Heart right ventricle (tissue), 16 donors: ENCODE measurements at regions of chr17 and their contacts with region 1.

Region 1: DNA sequence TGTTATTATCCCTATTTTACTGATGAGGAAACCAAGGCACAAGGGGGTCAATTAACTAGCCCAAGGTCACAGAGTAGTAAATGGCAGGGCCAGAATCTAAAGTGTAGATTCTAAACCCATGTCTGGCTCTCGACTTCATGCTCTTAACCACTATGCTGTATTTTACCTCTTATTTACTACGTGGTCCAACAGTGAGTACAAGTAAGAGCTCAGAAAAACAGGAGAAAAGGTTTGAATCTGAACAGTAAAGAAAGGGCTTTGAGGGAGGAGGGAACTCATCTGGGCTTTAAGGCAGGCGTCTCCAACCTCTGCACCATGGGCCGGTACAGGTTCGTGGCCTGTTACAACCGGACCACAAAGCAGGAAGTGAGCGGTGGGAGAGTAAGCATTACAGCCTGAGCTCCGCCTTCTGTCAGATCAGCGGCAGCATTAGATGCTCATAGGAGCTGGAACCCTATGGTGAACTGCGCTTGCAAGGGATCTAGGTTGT is 62.9 kb downstream of the SMURF2 start:
- DNase-seq: no peak
- ATAC-seq: peak in 3 of 8 donors; percentile 35 to 40 (median 35)
- H3K4me3 ChIP-seq: no peak overlapping the region
- H3K27ac ChIP-seq: peak overlapping the region in 1 of 10 donors; percentile 51
- H3K4me1 ChIP-seq: peaks cover 0 to 44% (median 12%) of the 10 kb centered on the region in 9 donors
- H3K27me3 ChIP-seq: no peaks in the 10 kb centered on the region
- CTCF ChIP-seq: no peak

Region 2: GRCh38 chr17:64073771-64074703 is 525.2 kb before region 1 on chr17:
- intact Hi-C with region 1: no loop called
- DNase-seq: no peak
- ATAC-seq: peak in 1 of 8 donors; percentile 50
- H3K4me3 ChIP-seq: no peak overlapping the region
- H3K27ac ChIP-seq: peak overlapping the region in 4 of 10 donors; percentile 31 to 83 (median 36)
- H3K4me1 ChIP-seq: peaks cover 0 to 45% (median 8%) of the 10 kb centered on the region in 9 donors
- H3K27me3 ChIP-seq: no peaks in the 10 kb centered on the region
- CTCF ChIP-seq: no peak

Region 3: DNA sequence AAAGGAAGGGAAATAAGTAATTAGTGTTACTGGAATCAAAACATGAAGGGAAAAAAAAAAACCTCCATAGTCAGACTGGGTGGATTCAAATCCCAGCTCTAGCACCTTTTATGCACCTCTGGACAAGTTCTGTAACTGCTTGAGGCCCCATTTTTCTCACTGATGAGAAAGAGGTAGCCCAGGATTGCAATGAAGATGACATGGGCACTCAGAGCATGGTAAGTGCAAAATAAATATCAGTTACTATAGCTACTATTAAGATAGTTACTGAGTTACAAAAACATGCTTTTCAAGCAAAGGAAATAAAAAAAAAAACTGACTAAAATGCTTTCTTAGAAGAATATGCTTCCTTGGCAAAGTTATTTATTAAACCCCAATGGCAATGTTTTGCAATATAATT is 33.7 kb before region 1 on chr17:
- intact Hi-C with region 1: no loop called
- DNase-seq: no peak
- ATAC-seq: no peak
- H3K4me3 ChIP-seq: no peak overlapping the region
- H3K27ac ChIP-seq: no peak overlapping the region
- H3K4me1 ChIP-seq: peaks cover 0 to 10% (median 0%) of the 10 kb centered on the region in 9 donors
- H3K27me3 ChIP-seq: no peaks in the 10 kb centered on the region
- CTCF ChIP-seq: no peak

Region 4: DNA sequence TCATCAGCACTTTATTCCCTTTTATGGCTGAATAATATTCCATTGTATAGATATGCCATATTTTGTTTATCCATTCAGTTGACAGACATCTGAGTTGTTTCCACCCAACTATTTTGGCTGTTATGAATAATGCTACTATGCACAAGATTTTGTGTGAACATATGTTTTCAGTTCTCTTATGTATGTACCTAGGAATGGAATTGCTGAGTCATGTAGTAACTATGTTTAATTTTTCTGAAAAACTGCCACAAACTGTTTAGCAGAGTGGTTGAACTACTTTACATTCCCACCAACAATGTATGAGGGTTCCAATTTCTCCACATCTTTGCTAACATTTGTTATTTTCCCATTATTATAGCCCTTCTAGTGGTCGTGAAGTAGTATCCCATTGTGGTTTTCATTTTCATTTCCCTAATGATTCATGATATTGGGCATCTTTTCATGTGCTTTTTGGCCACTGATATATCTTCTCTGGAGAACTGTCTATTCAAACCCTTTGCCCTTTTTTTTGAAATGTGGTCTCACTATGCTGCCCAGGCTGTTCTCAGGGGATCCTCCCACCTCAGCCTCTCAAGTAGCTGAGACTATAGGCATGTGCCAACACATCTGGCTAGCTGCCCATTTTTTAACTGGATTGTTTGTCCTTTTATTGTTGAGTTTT is 36.5 kb after region 1 on chr17:
- intact Hi-C with region 1: loop called in 2 of 10 experiments (anchors 5 to 10 kb)
- DNase-seq: no peak
- ATAC-seq: no peak
- H3K4me3 ChIP-seq: no peak overlapping the region
- H3K27ac ChIP-seq: no peak overlapping the region
- H3K4me1 ChIP-seq: peaks cover 0 to 52% (median 10%) of the 10 kb centered on the region in 9 donors
- H3K27me3 ChIP-seq: no peaks in the 10 kb centered on the region
- CTCF ChIP-seq: no peak

Region 5: DNA sequence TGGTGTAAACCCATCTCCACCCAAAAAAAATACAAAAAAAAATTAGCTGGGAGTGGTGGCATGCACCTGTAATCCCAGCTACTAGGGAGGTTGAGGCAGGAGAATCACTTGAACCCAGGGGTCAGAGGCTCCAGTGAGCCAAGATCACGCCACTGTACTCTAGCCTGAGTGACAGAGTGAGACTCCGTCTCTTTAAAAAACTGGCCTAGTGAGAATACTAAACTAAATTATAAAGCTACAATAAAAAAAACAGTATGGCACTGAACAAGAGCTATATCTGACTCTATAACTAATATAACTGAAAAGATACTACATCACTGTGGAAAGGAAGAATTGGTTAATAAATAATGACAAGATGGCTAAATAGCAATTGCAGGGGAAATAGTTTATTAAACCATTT is 56.5 kb after region 1 on chr17:
- intact Hi-C with region 1: no loop called
- DNase-seq: no peak
- ATAC-seq: no peak
- H3K4me3 ChIP-seq: no peak overlapping the region
- H3K27ac ChIP-seq: no peak overlapping the region
- H3K4me1 ChIP-seq: peaks cover 0 to 58% (median 30%) of the 10 kb centered on the region in 9 donors
- H3K27me3 ChIP-seq: no peaks in the 10 kb centered on the region
- CTCF ChIP-seq: no peak

Region 6: DNA sequence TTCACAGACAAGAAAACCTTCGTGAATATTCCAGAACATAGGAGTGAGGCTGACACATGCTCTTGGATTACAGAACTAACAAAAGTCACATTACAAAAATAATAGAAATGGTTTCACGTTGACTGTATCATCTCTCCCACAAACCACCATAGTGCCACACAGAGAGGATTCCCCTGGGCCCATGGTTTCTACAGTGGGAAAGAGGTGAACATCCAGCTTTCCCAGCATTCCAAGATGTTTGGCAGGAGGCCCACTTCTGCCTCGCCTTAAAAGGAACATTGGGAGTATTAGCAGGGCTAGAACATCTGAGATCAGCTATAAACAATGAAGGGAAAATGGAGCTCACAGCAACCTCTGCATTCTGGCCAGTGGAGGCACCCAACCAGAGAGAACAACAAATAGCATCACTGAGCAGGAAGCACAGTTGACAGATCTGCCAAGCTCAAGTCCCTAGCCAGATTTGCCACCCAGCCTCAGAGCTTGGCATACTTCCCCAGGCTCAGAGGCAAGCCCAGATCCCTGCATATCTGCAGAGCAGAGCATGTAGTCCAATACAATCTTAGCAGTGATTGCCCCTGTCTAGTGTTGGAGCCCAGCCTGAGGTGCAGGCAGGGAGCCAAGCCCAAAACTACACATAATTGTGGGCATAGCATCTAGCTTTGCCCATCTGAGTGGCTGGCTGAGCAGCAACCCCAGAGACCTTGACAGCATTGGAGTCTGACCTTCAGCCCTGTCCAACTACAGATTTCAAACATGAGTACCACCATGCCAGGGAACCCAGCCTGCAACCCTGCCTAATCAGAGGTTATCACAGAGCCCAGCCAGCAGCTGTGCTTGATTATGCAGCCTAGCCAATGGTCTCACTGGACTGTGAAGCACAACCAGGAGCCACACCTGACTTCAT is 1332.3 kb after region 1 on chr17:
- intact Hi-C with region 1: no loop called
- DNase-seq: peak; percentile 40 to 60
- ATAC-seq: peak; percentile 88 to 100 (median 96)
- H3K4me3 ChIP-seq: no peak overlapping the region
- H3K27ac ChIP-seq: peak overlapping the region in 2 of 10 donors; percentile 3 to 64
- H3K4me1 ChIP-seq: no peaks in the 10 kb centered on the region
- H3K27me3 ChIP-seq: no peaks in the 10 kb centered on the region
- CTCF ChIP-seq: peak in 2 of 9 donors; percentile 12 to 13